ENCODE measurements at regions of chr4 and their contacts with region 1.

Region 1: DNA sequence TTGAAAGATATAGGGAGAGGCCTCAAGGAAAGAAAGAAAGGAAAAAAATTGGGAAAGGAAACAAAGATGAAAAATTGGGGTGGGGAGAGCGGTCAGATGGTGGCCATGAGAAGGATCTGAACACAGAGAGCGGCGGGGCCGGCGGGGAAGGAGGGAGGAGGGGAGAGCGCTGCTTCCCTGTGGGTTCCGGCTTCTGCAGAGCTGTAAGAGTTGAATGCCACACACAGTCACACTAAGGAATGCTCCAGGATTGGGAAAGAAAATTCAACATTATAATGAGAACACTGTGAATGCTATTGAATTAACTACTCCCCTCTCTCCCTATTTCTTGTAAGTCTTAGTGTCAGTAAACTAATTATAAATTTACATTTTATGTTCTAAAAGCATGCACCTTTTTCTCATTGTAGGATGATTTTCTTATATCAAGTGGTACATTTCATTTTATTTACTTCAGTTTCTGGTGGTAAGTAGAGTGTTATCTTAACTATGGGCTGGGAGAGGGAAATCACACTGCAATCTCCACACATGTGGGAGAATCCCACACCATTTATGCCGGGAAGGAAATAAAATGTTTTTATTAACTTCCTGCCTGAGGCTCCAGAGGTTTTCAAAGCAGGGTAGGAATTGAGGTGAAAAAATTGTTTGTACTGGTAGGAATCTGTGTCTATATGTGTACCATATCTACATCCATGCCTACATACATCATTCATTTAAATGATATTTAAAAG is 904 bp downstream of the F11 start:
- DNase-seq: no peak
- H3K4me3 ChIP-seq: peak overlapping the region in 1 of 4 experiments; percentile 48; a peak in 2 of 8 replicates
- H3K27ac ChIP-seq: no peak overlapping the region
- H3K4me1 ChIP-seq: peaks cover 3 to 14% (median 9%) of the 10 kb centered on the region in 4 experiments; a peak in 5 of 7 replicates
- H3K27me3 ChIP-seq: no peaks in the 10 kb centered on the region
- CTCF ChIP-seq: no peak
- EP300 ChIP-seq: no peak
- POLR2A ChIP-seq: no peak
- RAD21 ChIP-seq: no peak

Region 2: DNA sequence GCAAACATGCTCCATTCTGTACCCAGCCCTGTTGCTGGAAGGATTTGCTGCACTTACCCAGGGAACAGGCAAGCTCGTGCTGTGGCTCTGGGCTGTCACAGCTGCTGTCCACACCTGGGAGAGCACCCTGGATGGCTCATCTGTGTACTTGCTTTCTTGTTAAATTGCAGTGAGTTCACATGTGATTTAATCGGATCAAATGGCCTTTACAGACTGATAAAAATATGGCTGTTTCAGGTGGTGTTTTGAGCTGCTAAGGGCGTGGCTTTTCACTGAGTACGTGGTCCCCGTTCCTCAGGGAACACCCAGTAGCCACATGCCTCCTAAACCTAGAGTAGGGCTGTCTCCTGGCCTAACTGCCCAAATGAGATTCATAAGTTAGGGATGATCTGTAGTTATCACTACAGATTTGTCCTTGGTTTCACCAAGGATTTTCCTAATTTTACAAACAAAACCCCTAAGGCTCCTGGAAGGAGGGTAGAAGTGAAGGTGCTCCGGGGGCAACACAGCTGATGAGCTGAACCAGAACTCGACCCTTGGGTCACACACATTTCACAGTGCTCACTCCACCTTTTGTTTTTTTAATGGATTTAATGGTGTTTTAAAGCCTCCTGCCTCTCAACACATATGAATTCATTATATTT is 25.9 kb before region 1 on chr4:
- CTCF ChIA-PET with region 1: no interaction called
- POLR2A ChIA-PET with region 1: interaction called, 14 read pairs
- DNase-seq: no peak
- H3K4me3 ChIP-seq: peak overlapping the region in 1 of 4 experiments; percentile 95; a peak in 2 of 8 replicates
- H3K27ac ChIP-seq: no peak overlapping the region; the same call in 1 of the 2 replicates
- H3K4me1 ChIP-seq: peaks cover 0 to 6% (median 4%) of the 10 kb centered on the region in 4 experiments; a peak in 5 of 7 replicates
- H3K27me3 ChIP-seq: no peaks in the 10 kb centered on the region
- CTCF ChIP-seq: no peak
- EP300 ChIP-seq: no peak
- POLR2A ChIP-seq: peak; percentile 93 to 95
- RAD21 ChIP-seq: no peak

Region 3: GRCh38 chr4:186249785-186250754 is 16.8 kb before region 1 on chr4:
- CTCF ChIA-PET with region 1: no interaction called
- POLR2A ChIA-PET with region 1: interaction called, 37 read pairs
- DNase-seq: no peak
- H3K4me3 ChIP-seq: peak overlapping the region in 1 of 4 experiments; percentile 45; a peak in 2 of 8 replicates
- H3K27ac ChIP-seq: peak overlapping the region; percentile 91
- H3K4me1 ChIP-seq: peaks cover 7 to 26% (median 23%) of the 10 kb centered on the region in 4 experiments; a peak in 6 of 7 replicates
- H3K27me3 ChIP-seq: no peaks in the 10 kb centered on the region
- CTCF ChIP-seq: no peak
- EP300 ChIP-seq: peak in 1 of 2 experiments; percentile 91; a peak in 1 of 3 replicates
- POLR2A ChIP-seq: peak; percentile 66 to 78
- RAD21 ChIP-seq: no peak